ENCODE measurements at regions of chr14 and their contacts with region 1.

Region 1: GRCh38 chr14:30471980-30472379 is 87.0 kb upstream of the G2E3 start:
- DNase-seq: no peak
- H3K4me3 ChIP-seq: no peak overlapping the region
- H3K27ac ChIP-seq: no peak overlapping the region
- H3K4me1 ChIP-seq: no peaks in the 10 kb centered on the region
- H3K27me3 ChIP-seq: no peaks in the 10 kb centered on the region
- CTCF ChIP-seq: no peak
- POLR2A ChIP-seq: no peak

Region 2: DNA sequence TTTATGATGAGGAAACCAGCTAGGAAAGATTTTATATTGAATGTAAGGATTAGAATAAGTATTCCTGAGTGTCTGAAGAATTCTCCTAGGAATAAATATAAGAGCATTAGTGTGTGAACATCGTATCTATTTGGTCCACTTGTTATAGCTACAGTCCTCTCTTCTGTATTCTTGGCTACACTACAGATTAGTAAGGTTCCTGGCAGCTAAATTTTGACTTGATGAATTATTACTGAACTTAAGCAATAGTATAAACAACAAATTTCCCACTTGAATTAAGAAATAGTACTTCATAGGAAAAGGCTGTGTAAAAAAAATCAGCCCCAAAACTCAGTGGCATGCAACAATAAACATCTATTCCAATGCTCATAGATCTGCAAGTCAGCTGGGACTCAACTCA is 51.5 kb before region 1 on chr14:
- CTCF ChIA-PET with region 1: no interaction called
- POLR2A ChIA-PET with region 1: no interaction called
- dilution Hi-C with region 1: no loop called
- intact Hi-C with region 1: loop called (anchors 5 kb)
- DNase-seq: no peak
- H3K4me3 ChIP-seq: no peak overlapping the region
- H3K27ac ChIP-seq: no peak overlapping the region
- H3K4me1 ChIP-seq: no peaks in the 10 kb centered on the region
- H3K27me3 ChIP-seq: no peaks in the 10 kb centered on the region
- CTCF ChIP-seq: no peak
- POLR2A ChIP-seq: no peak

Measured in endothelial cell of umbilical vein (primary cell).